ENCODE measurements at regions of chr19 and their contacts with region 1.

Region 1: GRCh38 chr19:41263850-41264580 is at the start of gene HNRNPUL1:
- DNase-seq: peak; percentile 99
- CTCF ChIP-seq: peak; percentile 23

Region 2: GRCh38 chr19:41175801-41176777 is 87.9 kb before region 1 on chr19:
- CTCF ChIA-PET with region 1: no interaction called
- POLR2A ChIA-PET with region 1: no interaction called
- DNase-seq: no peak
- CTCF ChIP-seq: no peak

Region 3: DNA sequence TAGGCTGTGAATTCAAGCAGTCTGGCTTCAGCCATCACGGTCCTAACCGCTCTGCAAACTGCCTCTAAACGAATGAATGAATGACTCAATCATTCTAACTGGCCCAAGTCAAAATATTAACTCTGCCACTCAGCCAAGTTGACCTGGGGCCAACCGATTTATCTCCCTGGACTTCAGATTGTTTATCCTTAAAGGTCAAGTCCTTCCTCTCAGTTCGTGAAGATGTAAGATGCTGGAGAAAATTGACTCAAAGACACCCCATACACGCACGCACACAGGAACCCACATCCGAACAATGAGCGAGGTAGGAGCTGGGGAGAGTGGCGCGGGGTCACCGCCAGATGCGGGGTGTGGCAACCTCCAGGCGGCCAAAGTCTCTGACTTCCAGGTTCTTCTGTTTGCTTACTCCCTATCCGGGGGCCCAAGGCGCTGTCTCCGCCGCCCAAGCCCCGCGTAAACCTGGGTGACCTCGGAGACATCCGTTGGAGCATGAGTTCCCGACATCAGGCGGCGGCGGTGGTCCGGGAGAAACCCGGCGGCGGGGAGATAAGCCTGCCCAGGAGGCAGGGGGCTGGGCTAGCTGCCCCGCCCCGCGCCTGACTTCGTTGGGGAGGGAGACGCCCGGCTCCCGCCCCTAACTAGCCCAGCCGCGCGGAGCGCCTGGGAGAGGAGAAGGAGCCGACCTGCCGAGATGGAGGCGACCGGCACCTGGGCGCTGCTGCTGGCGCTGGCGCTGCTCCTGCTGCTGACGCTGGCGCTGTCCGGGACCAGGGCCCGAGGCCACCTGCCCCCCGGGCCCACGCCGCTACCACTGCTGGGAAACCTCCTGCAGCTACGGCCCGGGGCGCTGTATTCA is 71.2 kb before region 1 on chr19 and contains the start of gene CYP2S1:
- CTCF ChIA-PET with region 1: no interaction called
- POLR2A ChIA-PET with region 1: no interaction called
- DNase-seq: no peak
- CTCF ChIP-seq: no peak

Region 4: DNA sequence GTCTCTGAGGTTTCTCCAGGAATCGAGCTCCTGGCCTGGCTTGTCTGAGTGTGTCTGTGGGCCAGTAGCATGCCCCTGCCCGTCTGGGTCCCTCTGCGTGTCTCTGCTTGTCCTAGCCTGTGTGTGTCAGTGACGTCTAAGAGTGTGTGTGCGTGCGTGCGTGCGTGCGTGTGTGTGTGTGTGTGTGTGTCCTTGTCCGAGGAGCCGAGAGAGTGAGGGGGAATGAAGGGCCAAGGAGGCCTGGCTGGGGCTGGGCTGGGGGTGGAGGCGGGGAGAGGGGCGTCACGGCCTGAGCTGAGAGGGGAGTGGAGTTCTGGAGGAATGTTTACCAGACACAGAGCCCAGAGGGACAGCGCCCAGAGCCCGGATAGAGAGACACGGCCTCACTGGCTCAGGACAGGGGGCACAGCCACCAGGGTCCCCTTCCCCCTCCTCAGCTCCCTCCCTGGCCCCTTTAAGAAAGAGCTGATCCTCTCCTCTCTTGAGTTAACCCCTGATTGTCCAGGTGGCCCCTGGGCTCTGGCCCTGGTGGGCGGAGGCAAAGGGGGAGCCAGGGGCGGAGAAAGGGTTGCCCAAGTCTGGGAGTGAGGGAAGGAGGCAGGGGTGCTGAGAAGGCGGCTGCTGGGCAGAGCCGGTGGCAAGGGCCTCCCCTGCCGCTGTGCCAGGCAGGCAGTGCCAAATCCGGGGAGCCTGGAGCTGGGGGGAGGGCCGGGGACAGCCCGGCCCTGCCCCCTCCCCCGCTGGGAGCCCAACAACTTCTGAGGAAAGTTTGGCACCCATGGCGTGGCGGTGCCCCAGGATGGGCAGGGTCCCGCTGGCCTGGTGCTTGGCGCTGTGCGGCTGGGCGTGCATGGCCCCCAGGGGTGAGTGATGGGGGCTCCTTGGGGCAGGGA is 45.2 kb before region 1 on chr19 and contains the start of gene AXL:
- CTCF ChIA-PET with region 1: no interaction called
- POLR2A ChIA-PET with region 1: no interaction called
- DNase-seq: no peak
- CTCF ChIP-seq: no peak

Region 5: GRCh38 chr19:41298348-41298964 is 34.4 kb after region 1 on chr19:
- CTCF ChIA-PET with region 1: interaction called, 8 read pairs
- POLR2A ChIA-PET with region 1: interaction called, 11 read pairs
- DNase-seq: no peak
- CTCF ChIP-seq: no peak

Region 6: GRCh38 chr19:41303954-41304353 is 39.9 kb after region 1 on chr19:
- CTCF ChIA-PET with region 1: interaction called, 20 read pairs
- POLR2A ChIA-PET with region 1: interaction called, 11 read pairs
- DNase-seq: no peak
- CTCF ChIP-seq: no peak

Region 7: GRCh38 chr19:41501854-41502253 is 237.8 kb after region 1 on chr19:
- CTCF ChIA-PET with region 1: no interaction called
- POLR2A ChIA-PET with region 1: no interaction called
- DNase-seq: no peak
- CTCF ChIP-seq: no peak